ENCODE measurements at regions of chrX and their contacts with region 1.

Region 1: GRCh38 chrX:46903458-46904242 is 8.6 kb upstream of the JADE3 start:
- H3K4me3 ChIP-seq: peak overlapping the region; percentile 33
- H3K27ac ChIP-seq: no peak overlapping the region
- H3K4me1 ChIP-seq: peaks cover 2% of the 10 kb centered on the region; the same call in 1 of the 2 replicates
- CTCF ChIP-seq: peak; percentile 98

Region 2: GRCh38 chrX:46882266-46882665 is 21.4 kb before region 1 on chrX:
- CTCF ChIA-PET with region 1: interaction called, 11 read pairs
- POLR2A ChIA-PET with region 1: no interaction called
- H3K4me3 ChIP-seq: no peak overlapping the region
- H3K27ac ChIP-seq: no peak overlapping the region
- H3K4me1 ChIP-seq: no peaks in the 10 kb centered on the region
- CTCF ChIP-seq: no peak

Region 3: DNA sequence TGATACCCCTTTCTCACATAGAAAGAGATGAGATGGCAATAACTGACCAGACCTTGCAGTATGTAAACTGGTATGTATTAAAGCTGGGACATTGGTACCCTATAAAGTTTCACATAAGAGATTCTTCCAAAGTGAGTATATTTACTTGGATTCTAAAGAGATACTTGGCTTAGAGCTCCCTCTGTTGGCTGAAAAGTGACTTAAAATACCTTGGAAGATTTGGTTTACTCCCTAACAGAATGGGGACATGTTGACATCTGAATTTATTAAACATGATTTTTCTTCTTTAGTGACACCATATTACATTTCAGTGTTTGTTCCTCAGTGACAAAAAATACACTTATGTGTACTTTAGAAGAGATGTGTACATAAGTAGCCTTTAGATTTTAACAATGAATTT is 126.7 kb after region 1 on chrX:
- CTCF ChIA-PET with region 1: interaction called, 21 read pairs
- POLR2A ChIA-PET with region 1: no interaction called
- H3K4me3 ChIP-seq: no peak overlapping the region
- H3K27ac ChIP-seq: no peak overlapping the region
- H3K4me1 ChIP-seq: no peaks in the 10 kb centered on the region
- CTCF ChIP-seq: no peak

Region 4: GRCh38 chrX:47093248-47093647 is 189.6 kb after region 1 on chrX:
- CTCF ChIA-PET with region 1: interaction called, 24 read pairs
- POLR2A ChIA-PET with region 1: no interaction called
- H3K4me3 ChIP-seq: no peak overlapping the region
- H3K27ac ChIP-seq: no peak overlapping the region
- H3K4me1 ChIP-seq: 0 out of 2 replicates have a peak, but pooled peaks cover 2% of the 10 kb centered on the region
- CTCF ChIP-seq: no peak